Left colon (tissue), 2 donors: ENCODE measurements at regions of chr20 and their contacts with region 1.

Region 1: GRCh38 chr20:41738604-41739206 is 120.5 kb upstream of the CHD6 start:
- DNase-seq: peak in 1 of 2 donors; percentile 48
- ATAC-seq: peak; percentile 85

Region 2: DNA sequence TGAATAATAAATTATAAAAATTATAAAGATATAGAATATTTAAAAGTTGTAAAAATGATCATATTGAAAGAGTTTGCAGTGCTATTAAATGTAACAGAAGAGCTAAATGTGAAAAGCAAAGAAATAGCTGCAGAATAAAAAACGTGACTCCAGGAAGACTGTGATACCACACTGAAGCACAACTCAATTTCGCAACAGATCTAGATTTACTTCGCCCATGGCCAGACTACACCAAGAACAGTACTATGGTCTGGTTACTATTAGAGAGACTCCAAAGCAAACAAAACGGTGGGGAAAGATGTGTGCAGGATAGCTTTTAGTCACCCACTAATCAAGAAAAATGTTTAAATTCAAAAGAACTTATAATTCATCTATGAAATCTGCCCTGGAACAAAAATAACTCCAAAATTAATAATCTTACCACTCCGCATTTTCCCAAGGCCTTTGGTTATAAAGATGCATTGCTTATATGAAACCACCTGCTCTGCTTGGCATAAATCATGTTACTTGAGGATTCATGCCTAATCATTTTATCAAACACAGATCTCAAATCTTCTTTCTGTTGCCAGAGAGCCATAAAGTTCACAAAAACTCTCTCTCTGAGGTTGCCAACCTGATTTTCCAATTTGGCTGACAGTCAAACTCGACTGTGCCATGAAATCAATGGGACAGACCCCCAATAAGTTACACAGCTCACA is 122.3 kb before region 1 on chr20:
- intact Hi-C with region 1: no loop called
- DNase-seq: no peak
- ATAC-seq: no peak

Region 3: GRCh38 chr20:43191946-43192863 is 1453.5 kb after region 1 on chr20:
- intact Hi-C with region 1: loop called in 1 of 2 experiments (anchors 5 kb)
- DNase-seq: no peak
- ATAC-seq: peak; percentile 52